Activated T-helper 2 cell treated with anti-CD3 and anti-CD28 coated beads, Interferon-gamma antibody, Interleukin-2, Interleukin-4, amounts not matched to agents 10 μg/mL and 5 μg/mL and 100 μg/mL, durations not matched to agents 14 hours and 24 hours and 36 hours (primary cell): ENCODE measurements at regions of chr14 and their contacts with region 1.

Region 1: DNA sequence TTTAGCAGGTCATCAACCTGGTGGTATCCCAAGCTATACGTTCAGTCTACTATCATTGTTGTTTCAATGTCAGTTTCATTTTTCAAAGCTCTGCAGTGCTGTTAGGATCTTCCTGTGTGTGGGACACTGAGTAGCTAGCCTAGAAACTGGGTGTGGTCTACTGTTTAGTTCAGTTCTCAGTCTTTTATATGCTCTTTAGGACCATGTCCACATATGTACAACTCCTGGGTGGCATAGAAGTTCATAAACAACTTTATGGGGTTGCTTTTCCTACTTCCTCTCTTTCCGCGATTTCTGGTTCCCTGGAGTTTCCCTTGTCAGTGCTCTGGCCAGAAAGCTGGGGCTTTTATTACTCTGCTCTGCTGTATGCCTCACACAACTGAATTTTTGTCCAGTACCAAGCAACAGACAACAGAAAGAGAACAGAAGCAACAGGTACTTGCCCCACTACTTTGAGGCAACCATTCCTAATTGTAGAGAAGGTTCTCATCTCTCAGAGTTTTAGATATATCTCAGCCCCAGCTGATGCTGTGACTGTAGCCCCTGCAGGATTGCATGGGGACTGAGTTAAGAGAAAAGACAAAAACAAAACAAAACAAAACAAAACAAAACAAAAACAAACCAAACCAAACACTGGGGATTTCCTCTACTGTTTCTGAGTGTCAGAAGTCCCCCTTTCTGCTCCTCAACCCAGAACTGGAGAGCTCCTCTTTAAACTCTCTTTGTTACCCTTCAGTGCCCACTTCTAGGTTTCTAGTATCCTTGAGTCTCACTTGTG is 30.3 kb downstream of the MIS18BP1 start:
- DNase-seq: no peak
- H3K4me3 Mint-ChIP-seq: no peak overlapping the region
- H3K27ac Mint-ChIP-seq: peak overlapping the region; percentile 31
- H3K4me1 Mint-ChIP-seq: peaks cover 29% of the 10 kb centered on the region
- H3K27me3 Mint-ChIP-seq: no peaks in the 10 kb centered on the region

Region 2: DNA sequence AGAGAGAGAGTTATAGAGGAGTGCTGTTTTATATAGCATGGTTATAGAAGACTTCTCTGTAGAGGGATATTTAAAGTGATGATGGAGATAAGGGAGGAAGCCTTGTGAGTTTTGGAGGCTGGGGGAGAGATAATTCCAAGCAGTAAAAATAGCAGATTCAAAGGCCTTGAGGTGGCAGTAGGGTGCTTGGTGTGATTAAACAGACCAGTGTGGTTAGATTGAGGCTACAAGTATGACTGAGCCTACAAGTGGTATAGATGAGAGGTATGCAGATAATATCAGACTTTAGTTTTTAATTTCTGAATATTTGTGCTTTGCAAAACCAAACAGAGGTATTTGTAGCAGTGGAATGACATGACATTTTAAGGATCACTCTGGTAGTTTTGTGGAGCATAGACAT is 66.6 kb before region 1 on chr14:
- intact Hi-C with region 1: no loop called
- DNase-seq: no peak
- H3K4me3 Mint-ChIP-seq: no peak overlapping the region
- H3K27ac Mint-ChIP-seq: no peak overlapping the region
- H3K4me1 Mint-ChIP-seq: peaks cover 11% of the 10 kb centered on the region
- H3K27me3 Mint-ChIP-seq: no peaks in the 10 kb centered on the region

Region 3: DNA sequence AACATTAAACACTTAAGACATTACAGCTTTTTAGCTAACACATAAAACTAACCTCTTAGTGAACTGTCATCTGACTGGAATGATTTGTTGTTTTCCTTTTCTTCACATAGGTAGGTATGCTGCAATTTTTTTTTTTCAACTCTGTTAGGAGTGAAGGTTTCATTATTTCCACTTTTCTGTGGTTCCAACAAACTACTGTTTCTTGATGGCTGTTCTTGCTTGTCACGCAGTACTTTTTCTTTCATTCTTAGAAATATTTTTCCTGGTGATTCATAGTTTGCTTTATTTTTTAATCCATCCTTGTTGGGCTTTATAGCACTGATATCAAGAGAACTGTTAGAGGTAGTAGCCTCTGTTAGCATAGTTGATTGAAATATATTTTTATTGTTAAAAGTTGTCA is 24.0 kb after region 1 on chr14:
- intact Hi-C with region 1: loop called (anchors 2 kb)
- DNase-seq: no peak
- H3K4me3 Mint-ChIP-seq: no peak overlapping the region
- H3K27ac Mint-ChIP-seq: no peak overlapping the region
- H3K4me1 Mint-ChIP-seq: peaks cover 13% of the 10 kb centered on the region
- H3K27me3 Mint-ChIP-seq: no peaks in the 10 kb centered on the region

Region 4: GRCh38 chr14:45284802-45285201 is 62.1 kb after region 1 on chr14:
- intact Hi-C with region 1: no loop called
- DNase-seq: no peak
- H3K4me3 Mint-ChIP-seq: no peak overlapping the region
- H3K27ac Mint-ChIP-seq: no peak overlapping the region
- H3K4me1 Mint-ChIP-seq: no peaks in the 10 kb centered on the region
- H3K27me3 Mint-ChIP-seq: no peaks in the 10 kb centered on the region